Activated CD4-positive, alpha-beta memory T cell treated with anti-CD3 and anti-CD28 coated beads for 36 hours (primary cell): ENCODE measurements at regions of chr17 and their contacts with region 1.

Region 1: GRCh38 chr17:35242805-35243560 is at the start of gene SLFN5:
- DNase-seq: peak; percentile 96
- H3K4me3 Mint-ChIP-seq: peak within 1 kb of the TSS; percentile 96
- H3K27ac Mint-ChIP-seq: peak within 1 kb of the TSS; percentile 99
- H3K4me1 Mint-ChIP-seq: peaks cover 68% of the 10 kb centered on the region
- H3K27me3 Mint-ChIP-seq: no peaks in the 10 kb centered on the region
- total RNA-seq, gene SLFN5: 51.2 to 52.0 TPM

Region 2: GRCh38 chr17:35088881-35089585 is 153.9 kb before region 1 on chr17:
- CTCF ChIA-PET with region 1: no interaction called
- POLR2A ChIA-PET with region 1: no interaction called
- intact Hi-C with region 1: loop called (anchors 2 kb)
- DNase-seq: peak; percentile 93
- H3K4me3 Mint-ChIP-seq: peak overlapping the region; percentile 91
- H3K27ac Mint-ChIP-seq: peak overlapping the region; percentile 96
- H3K4me1 Mint-ChIP-seq: peaks cover 43% of the 10 kb centered on the region
- H3K27me3 Mint-ChIP-seq: no peaks in the 10 kb centered on the region

Region 3: DNA sequence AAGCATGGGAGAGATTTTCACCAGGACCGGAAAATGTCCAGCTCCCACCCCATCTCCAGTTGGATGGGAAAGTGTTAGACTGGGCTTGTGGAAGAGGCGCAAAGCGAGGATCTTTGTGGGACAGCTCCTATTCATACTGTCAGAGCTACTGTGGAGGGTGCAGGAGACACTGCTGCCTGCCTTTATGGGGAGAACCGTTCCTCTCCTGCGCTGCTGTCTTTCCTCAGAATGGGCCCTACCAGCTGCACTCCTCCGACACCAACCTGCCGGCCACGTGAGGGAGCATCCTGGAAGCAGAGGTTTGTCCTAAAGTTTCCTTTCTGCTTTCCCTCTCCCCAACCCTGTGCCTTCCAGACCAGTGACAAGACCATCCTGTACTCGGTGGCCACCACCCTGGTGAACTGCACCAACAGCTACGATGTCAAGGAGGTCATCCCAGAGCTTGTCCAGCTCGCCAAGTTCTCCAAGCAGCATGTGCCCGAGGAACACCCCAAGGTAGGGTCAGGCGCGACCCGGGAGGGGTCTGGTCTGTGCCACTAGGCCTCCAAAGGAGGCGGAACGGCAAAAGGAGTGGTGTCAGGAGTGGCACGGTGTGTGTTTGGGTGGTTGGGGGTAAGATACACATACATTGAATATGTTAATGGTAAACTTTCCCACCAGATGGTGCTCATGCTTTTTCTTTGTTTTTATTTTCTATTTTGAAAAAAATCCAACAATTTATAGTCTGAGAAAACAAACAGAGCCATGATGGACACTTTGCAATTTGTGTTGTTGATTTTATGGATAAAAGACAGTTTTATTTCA is 71.8 kb before region 1 on chr17:
- CTCF ChIA-PET with region 1: interaction called, 4 read pairs
- POLR2A ChIA-PET with region 1: interaction called, 4 read pairs
- intact Hi-C with region 1: loop called (anchors 1 kb)
- DNase-seq: peak; percentile 10
- H3K4me3 Mint-ChIP-seq: no peak overlapping the region
- H3K27ac Mint-ChIP-seq: peak overlapping the region; percentile 38
- H3K4me1 Mint-ChIP-seq: peaks cover 33% of the 10 kb centered on the region
- H3K27me3 Mint-ChIP-seq: no peaks in the 10 kb centered on the region

Region 4: GRCh38 chr17:35312790-35313711 is 70.1 kb after region 1 on chr17:
- CTCF ChIA-PET with region 1: interaction called, 6 read pairs
- POLR2A ChIA-PET with region 1: no interaction called
- intact Hi-C with region 1: loop called (anchors 2 kb)
- DNase-seq: peak; percentile 81
- H3K4me3 Mint-ChIP-seq: peak overlapping the region; percentile 82
- H3K27ac Mint-ChIP-seq: peak overlapping the region; percentile 83
- H3K4me1 Mint-ChIP-seq: peaks cover 30% of the 10 kb centered on the region
- H3K27me3 Mint-ChIP-seq: no peaks in the 10 kb centered on the region

Region 5: GRCh38 chr17:35359398-35359797 is 116.4 kb after region 1 on chr17:
- CTCF ChIA-PET with region 1: no interaction called
- POLR2A ChIA-PET with region 1: no interaction called
- intact Hi-C with region 1: no loop called
- DNase-seq: no peak
- H3K4me3 Mint-ChIP-seq: no peak overlapping the region
- H3K27ac Mint-ChIP-seq: no peak overlapping the region
- H3K4me1 Mint-ChIP-seq: peaks cover 35% of the 10 kb centered on the region
- H3K27me3 Mint-ChIP-seq: no peaks in the 10 kb centered on the region

Region 6: GRCh38 chr17:35448214-35448898 is 205.4 kb after region 1 on chr17 and contains the start of gene SLFN13:
- CTCF ChIA-PET with region 1: no interaction called
- POLR2A ChIA-PET with region 1: no interaction called
- intact Hi-C with region 1: loop called (anchors 2 kb)
- DNase-seq: peak; percentile 97
- H3K4me3 Mint-ChIP-seq: peak within 1 kb of the TSS; percentile 57
- H3K27ac Mint-ChIP-seq: peak within 1 kb of the TSS; percentile 33
- H3K4me1 Mint-ChIP-seq: peaks cover 16% of the 10 kb centered on the region
- H3K27me3 Mint-ChIP-seq: no peaks in the 10 kb centered on the region
- total RNA-seq, gene SLFN13: 46.0 to 48.7 TPM

Region 7: DNA sequence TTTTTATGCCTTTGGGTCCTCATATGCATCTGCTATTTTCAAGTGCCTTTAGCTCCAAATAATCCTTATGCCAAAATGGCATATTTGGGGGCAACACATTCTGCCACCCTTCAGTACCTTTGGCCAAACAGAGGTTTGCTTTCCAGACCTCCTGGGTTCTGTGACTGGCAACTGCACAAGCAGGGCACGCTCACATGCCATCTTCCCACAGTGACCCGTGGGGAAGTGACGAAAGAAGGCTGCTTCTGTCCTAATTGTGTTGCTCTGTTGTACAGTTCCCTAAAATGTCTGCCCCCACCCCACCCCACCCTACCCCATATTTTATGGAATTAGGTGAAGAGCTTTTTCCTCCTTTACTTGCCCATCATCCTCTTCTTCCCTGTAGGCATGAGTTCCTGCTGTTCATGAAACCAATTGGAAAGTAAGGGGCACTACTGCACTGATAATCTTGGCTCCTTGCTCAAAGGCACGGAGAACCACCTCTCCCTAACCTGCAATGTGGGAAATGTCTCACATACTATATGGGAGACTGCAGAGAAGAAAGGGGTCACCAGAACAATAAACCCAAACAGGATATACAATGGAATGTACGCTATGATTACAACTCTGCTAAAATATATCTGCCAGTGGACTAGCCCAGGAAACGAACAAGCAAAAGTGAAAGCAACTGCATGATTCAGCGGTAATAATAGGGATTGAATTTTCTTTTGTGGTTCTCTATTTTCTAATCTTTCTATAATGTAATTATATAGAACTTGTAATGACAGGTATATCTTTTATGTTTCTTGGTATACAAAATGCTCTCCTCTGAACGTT is 297.8 kb after region 1 on chr17:
- CTCF ChIA-PET with region 1: interaction called, 9 read pairs
- POLR2A ChIA-PET with region 1: interaction called, 33 read pairs
- intact Hi-C with region 1: loop called (anchors 1 kb)
- DNase-seq: peak; percentile 73
- H3K4me3 Mint-ChIP-seq: peak overlapping the region; percentile 77
- H3K27ac Mint-ChIP-seq: peak overlapping the region; percentile 97
- H3K4me1 Mint-ChIP-seq: peaks cover 39% of the 10 kb centered on the region
- H3K27me3 Mint-ChIP-seq: no peaks in the 10 kb centered on the region

Region 8: DNA sequence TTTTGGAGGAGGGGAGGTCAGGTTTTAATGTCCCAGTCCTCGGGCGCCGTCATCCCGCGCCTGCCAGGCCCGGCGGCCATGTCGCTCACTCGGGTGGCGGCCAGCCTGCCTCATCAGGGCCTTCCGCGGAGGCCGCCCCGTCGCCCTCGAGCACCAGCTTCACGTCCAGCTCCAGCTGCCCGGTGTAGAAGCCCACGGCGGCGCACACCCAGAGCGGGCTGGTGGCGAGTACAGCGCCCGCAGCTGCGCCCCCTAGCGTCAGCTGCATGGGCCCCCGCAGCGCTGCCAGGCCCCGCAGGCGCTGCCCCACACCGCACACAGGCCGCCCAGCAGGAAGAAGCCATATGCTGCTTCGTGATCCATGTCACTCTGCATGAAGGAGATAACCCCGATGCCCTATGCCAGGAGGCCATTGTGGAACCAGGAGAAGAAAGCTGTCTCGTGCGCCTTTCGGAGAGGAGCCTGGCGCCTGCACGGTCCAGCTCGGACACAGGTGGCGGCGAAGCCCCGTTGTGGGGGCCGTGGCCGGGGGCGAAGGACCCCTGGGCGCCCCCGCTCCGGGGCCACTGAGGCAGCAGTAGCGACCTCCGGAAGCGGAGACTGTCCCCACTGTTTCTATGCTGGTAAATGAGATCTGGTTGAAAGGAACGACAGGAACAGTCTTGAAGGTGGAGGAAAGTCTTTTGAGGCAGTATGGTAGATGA is 353.7 kb after region 1 on chr17:
- CTCF ChIA-PET with region 1: no interaction called
- POLR2A ChIA-PET with region 1: no interaction called
- intact Hi-C with region 1: no loop called
- DNase-seq: no peak
- H3K4me3 Mint-ChIP-seq: no peak overlapping the region
- H3K27ac Mint-ChIP-seq: no peak overlapping the region
- H3K4me1 Mint-ChIP-seq: peaks cover 5% of the 10 kb centered on the region
- H3K27me3 Mint-ChIP-seq: no peaks in the 10 kb centered on the region

Region 9: GRCh38 chr17:35808962-35809854 is 566.2 kb after region 1 on chr17 and contains the start of gene TAF15:
- CTCF ChIA-PET with region 1: no interaction called
- POLR2A ChIA-PET with region 1: no interaction called
- intact Hi-C with region 1: loop called (anchors 2 kb)
- DNase-seq: peak; percentile 97
- H3K4me3 Mint-ChIP-seq: peak within 1 kb of the TSS; percentile 81
- H3K27ac Mint-ChIP-seq: peak within 1 kb of the TSS; percentile 99
- H3K4me1 Mint-ChIP-seq: peaks cover 46% of the 10 kb centered on the region
- H3K27me3 Mint-ChIP-seq: no peaks in the 10 kb centered on the region
- total RNA-seq, gene TAF15: 269 to 271 TPM